Mucosa of descending colon (tissue), 3 donors: ENCODE measurements at regions of chr19 and their contacts with region 1.

Region 1: GRCh38 chr19:38634757-38635482 is 12.5 kb upstream of the ACTN4 start:
- DNase-seq: peak; percentile 79 to 88 (median 86)
- ATAC-seq: peak; percentile 41
- H3K4me3 ChIP-seq: no peak overlapping the region
- H3K4me1 ChIP-seq: peaks cover 22% of the 10 kb centered on the region
- CTCF ChIP-seq: peak; percentile 88

Region 2: GRCh38 chr19:38402967-38403861 is 231.7 kb before region 1 on chr19 and contains the start of gene FAM98C:
- intact Hi-C with region 1: loop called in 1 of 2 experiments (anchors 10 kb)
- DNase-seq: peak; percentile 98
- ATAC-seq: peak; percentile 98
- H3K4me3 ChIP-seq: peak within 1 kb of the TSS; percentile 85
- H3K4me1 ChIP-seq: no peaks in the 10 kb centered on the region
- CTCF ChIP-seq: peak; percentile 99
- total RNA-seq, gene FAM98C: 24.1 to 42.3 (median 30.1) TPM